ENCODE measurements at regions of chr14 and their contacts with region 1.

Region 1: DNA sequence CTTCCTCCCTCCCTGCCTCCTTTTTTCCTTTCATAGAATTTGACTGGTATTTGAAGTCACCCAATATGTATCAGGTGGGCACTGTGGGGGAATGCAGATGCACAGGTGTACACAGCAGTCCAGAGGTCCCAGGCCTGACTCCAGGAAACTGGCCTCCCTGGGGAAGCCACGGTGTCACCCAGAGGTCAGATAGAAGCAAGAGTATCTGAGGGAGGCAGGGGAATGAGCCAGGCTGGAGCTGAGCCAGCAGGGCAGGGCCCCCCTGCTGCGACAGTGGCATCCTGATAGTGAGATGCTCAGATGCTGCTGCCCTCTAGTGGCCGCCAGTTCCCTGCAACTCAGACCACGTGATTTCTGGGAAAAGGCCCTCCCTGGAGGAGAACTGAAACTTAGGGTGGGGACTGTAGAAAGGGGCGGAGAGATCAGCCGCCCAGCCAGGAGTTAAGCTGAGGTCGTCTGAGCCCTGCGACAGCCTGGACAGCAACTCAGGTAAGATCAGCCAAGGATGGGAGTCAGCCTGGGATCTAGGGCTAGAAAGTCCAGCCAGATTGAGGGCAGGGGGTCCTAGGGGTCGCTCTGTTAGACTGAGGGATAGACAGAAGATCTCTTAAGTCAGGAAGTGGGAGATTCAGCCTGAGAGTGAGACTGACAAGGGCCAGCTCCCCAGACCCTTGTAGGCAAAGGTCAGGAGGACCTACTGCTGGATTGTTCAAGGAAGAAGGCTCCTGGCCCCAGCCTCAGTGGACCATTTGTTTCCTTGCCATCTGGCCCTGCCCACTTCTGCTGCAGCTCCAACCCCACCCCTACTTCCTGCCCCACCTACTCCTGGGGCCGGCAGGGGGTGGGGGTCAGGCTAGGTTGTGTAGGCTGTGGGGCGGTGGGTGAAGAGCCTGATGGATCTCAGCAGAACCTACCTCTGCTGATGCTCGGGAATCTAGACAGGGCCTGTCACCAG is at the start of gene IRF9:
- DNase-seq: peak; percentile 93 to 97 (median 96)
- H3K4me3 ChIP-seq: peak within 1 kb of the TSS; percentile 99
- H3K4me3 Mint-ChIP-seq: peak within 1 kb of the TSS; percentile 89 to 100 (median 98)
- H3K27ac ChIP-seq: peak within 1 kb of the TSS; percentile 96
- H3K27ac Mint-ChIP-seq: peak within 1 kb of the TSS; percentile 84 to 100 (median 99)
- H3K4me1 ChIP-seq: peaks cover 41% of the 10 kb centered on the region
- H3K4me1 Mint-ChIP-seq: peaks cover 40 to 56% (median 49%) of the 10 kb centered on the region in 3 donors
- H3K27me3 ChIP-seq: no peaks in the 10 kb centered on the region
- H3K27me3 Mint-ChIP-seq: peaks cover 0 to 3% of the 10 kb centered on the region in 2 donors
- total RNA-seq, gene IRF9: 62.0 to 68.6 TPM

Region 2: GRCh38 chr14:24058260-24058950 is 102.7 kb before region 1 on chr14:
- CTCF ChIA-PET with region 1: interaction called, 21 read pairs
- POLR2A ChIA-PET with region 1: no interaction called
- DNase-seq: peak; percentile 43 to 67 (median 52)
- H3K4me3 ChIP-seq: no peak overlapping the region
- H3K4me3 Mint-ChIP-seq: peak overlapping the region in 1 of 7 donors; percentile 22
- H3K27ac ChIP-seq: no peak overlapping the region
- H3K27ac Mint-ChIP-seq: peak overlapping the region in 3 of 8 donors; percentile 65 to 86 (median 85)
- H3K4me1 ChIP-seq: no peaks in the 10 kb centered on the region
- H3K4me1 Mint-ChIP-seq: peaks cover 3 to 8% (median 4%) of the 10 kb centered on the region in 3 donors
- H3K27me3 ChIP-seq: no peaks in the 10 kb centered on the region
- H3K27me3 Mint-ChIP-seq: peaks cover 0 to 1% of the 10 kb centered on the region in 2 donors

Region 3: DNA sequence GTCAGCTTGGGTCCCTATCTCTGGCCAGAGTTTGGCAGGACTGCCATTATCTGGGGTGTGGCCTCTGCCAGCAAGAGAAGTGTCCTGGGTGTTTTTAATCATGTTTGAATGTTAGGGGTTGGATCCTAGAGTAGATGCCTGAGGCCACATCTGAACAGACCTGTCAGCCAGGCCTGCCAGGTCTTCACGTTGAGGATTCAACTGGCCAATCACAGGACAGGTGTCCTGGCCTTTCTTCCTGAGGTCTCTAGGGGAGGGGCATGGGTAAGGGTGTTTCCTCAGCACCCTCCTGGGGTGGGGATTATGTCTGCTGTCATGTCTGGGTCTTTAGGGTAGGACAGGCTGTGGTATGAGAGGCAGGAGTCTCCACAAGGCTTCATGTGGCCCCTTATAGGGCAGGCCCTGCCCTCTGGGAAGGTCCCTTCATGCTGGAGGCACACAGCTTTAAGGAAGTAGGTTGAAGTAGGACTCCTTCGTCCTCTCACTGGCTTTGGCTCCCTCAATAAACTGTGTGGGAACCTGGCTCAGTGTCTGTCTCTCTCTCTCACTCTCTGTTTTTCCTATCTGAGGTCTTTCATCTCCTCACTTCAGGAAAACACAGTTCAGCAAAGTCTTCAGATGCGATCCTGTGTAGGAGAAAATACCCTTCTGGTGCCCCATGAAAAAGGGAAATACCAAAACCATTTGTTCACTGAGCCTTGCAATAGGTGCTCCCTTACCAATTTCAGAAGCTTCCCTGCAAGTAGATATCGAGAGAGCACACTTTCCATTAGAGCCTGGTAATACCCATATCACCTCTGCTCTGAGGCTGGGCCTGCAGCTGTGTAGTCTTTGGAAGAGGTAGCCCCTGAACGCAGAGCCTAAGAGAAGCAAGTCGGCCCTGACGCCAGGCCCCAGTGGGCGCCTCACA is 37.4 kb before region 1 on chr14:
- CTCF ChIA-PET with region 1: interaction called, 13 read pairs
- POLR2A ChIA-PET with region 1: no interaction called
- DNase-seq: no peak
- H3K4me3 ChIP-seq: no peak overlapping the region
- H3K4me3 Mint-ChIP-seq: peak overlapping the region in 1 of 7 donors; percentile 35
- H3K27ac ChIP-seq: no peak overlapping the region
- H3K27ac Mint-ChIP-seq: peak overlapping the region in 4 of 8 donors; percentile 29 to 46 (median 34)
- H3K4me1 ChIP-seq: no peaks in the 10 kb centered on the region
- H3K4me1 Mint-ChIP-seq: peaks cover 0 to under 1% (median 0%) of the 10 kb centered on the region in 3 donors
- H3K27me3 ChIP-seq: no peaks in the 10 kb centered on the region
- H3K27me3 Mint-ChIP-seq: no peaks in the 10 kb centered on the region

Region 4: GRCh38 chr14:24146978-24147760 is 14.0 kb before region 1 on chr14 and contains the start of gene RNF31:
- CTCF ChIA-PET with region 1: interaction called, 50 read pairs
- POLR2A ChIA-PET with region 1: interaction called, 13 read pairs
- DNase-seq: peak; percentile 96 to 98 (median 97)
- H3K4me3 ChIP-seq: peak within 1 kb of the TSS; percentile 99
- H3K4me3 Mint-ChIP-seq: peak within 1 kb of the TSS; percentile 86 to 100 (median 98)
- H3K27ac ChIP-seq: peak within 1 kb of the TSS; percentile 78
- H3K27ac Mint-ChIP-seq: peak within 1 kb of the TSS; percentile 76 to 99 (median 96)
- H3K4me1 ChIP-seq: peaks cover 53% of the 10 kb centered on the region
- H3K4me1 Mint-ChIP-seq: peaks cover 45 to 70% (median 68%) of the 10 kb centered on the region in 3 donors
- H3K27me3 ChIP-seq: no peaks in the 10 kb centered on the region
- H3K27me3 Mint-ChIP-seq: no peaks in the 10 kb centered on the region
- total RNA-seq, gene RNF31: 85.9 TPM

Region 5: GRCh38 chr14:24188251-24189058 is 27.3 kb after region 1 on chr14 and contains the start of gene IPO4:
- CTCF ChIA-PET with region 1: interaction called, 36 read pairs
- POLR2A ChIA-PET with region 1: interaction called, 3 read pairs
- DNase-seq: peak; percentile 91 to 97 (median 94)
- H3K4me3 ChIP-seq: peak within 1 kb of the TSS; percentile 85
- H3K4me3 Mint-ChIP-seq: peak within 1 kb of the TSS; percentile 90 to 95 (median 92)
- H3K27ac ChIP-seq: peak within 1 kb of the TSS; percentile 74
- H3K27ac Mint-ChIP-seq: peak within 1 kb of the TSS; percentile 80 to 99 (median 96)
- H3K4me1 ChIP-seq: peaks cover 31% of the 10 kb centered on the region
- H3K4me1 Mint-ChIP-seq: peaks cover 25 to 56% (median 43%) of the 10 kb centered on the region in 3 donors
- H3K27me3 ChIP-seq: no peaks in the 10 kb centered on the region
- H3K27me3 Mint-ChIP-seq: no peaks in the 10 kb centered on the region
- total RNA-seq, gene IPO4: 164 to 172 TPM

Region 6: GRCh38 chr14:24241829-24242443 is 80.8 kb after region 1 on chr14:
- CTCF ChIA-PET with region 1: interaction called, 3 read pairs
- POLR2A ChIA-PET with region 1: interaction called, 10 read pairs
- DNase-seq: peak; percentile 92 to 97 (median 95)
- H3K4me3 ChIP-seq: peak overlapping the region; percentile 79
- H3K4me3 Mint-ChIP-seq: peak overlapping the region; percentile 93 to 99 (median 98)
- H3K27ac ChIP-seq: peak overlapping the region; percentile 99
- H3K27ac Mint-ChIP-seq: peak overlapping the region; percentile 98 to 100 (median 100)
- H3K4me1 ChIP-seq: peaks cover 51% of the 10 kb centered on the region
- H3K4me1 Mint-ChIP-seq: peaks cover 63 to 76% (median 76%) of the 10 kb centered on the region in 3 donors
- H3K27me3 ChIP-seq: no peaks in the 10 kb centered on the region
- H3K27me3 Mint-ChIP-seq: peaks cover 0 to 2% of the 10 kb centered on the region in 2 donors

Measured in CD8-positive, alpha-beta memory T cell (primary cell).